Caco-2 (cell line): ENCODE measurements at regions of chr13 and their contacts with region 1.

Region 1: GRCh38 chr13:67224148-67224846 is 5.8 kb downstream of the PCDH9 start:
- DNase-seq: peak; percentile 60 to 63
- H3K4me3 ChIP-seq: no peak overlapping the region
- H3K4me3 Mint-ChIP-seq: no peak overlapping the region
- H3K27ac Mint-ChIP-seq: no peak overlapping the region
- H3K4me1 ChIP-seq: no peaks in the 10 kb centered on the region
- H3K4me1 Mint-ChIP-seq: peaks cover 9% of the 10 kb centered on the region
- H3K27me3 ChIP-seq: no peaks in the 10 kb centered on the region
- H3K27me3 Mint-ChIP-seq: peaks cover 11% of the 10 kb centered on the region
- CTCF ChIP-seq: peak; percentile 69 to 81

Region 2: DNA sequence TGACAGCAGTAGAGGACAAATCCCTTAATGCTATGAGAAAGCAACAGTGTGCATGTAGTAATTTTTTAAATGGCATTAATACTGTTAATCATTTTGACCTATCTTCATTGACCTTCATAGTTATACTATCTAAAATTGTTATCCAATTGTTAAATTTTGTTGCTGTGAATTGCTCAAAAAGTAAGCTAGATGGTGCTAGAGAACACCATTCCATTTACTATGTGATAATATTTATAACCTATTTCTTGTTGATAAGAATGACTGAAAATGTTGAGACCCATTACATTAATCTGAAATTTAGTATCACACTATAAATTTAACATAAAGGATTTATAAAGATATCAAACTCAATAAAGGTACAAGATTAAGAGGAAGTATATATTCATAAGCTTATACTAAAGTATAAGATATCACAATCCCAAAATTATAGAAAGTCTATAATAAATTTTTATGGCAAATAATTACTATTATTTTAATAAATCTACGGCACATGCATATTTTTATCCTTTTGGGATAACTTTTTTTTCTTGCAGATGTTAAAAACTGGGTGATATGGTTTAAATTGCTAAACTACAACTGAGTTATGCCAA is 1567.5 kb before region 1 on chr13:
- CTCF ChIA-PET with region 1: no interaction called
- POLR2A ChIA-PET with region 1: no interaction called
- intact Hi-C with region 1: loop called (anchors 5 kb)
- DNase-seq: no peak
- H3K4me3 ChIP-seq: no peak overlapping the region
- H3K4me3 Mint-ChIP-seq: no peak overlapping the region
- H3K27ac Mint-ChIP-seq: no peak overlapping the region
- H3K4me1 ChIP-seq: no peaks in the 10 kb centered on the region
- H3K4me1 Mint-ChIP-seq: no peaks in the 10 kb centered on the region
- H3K27me3 ChIP-seq: no peaks in the 10 kb centered on the region
- H3K27me3 Mint-ChIP-seq: peaks cover under 1% of the 10 kb centered on the region
- CTCF ChIP-seq: peak; percentile 23 to 41

Region 3: DNA sequence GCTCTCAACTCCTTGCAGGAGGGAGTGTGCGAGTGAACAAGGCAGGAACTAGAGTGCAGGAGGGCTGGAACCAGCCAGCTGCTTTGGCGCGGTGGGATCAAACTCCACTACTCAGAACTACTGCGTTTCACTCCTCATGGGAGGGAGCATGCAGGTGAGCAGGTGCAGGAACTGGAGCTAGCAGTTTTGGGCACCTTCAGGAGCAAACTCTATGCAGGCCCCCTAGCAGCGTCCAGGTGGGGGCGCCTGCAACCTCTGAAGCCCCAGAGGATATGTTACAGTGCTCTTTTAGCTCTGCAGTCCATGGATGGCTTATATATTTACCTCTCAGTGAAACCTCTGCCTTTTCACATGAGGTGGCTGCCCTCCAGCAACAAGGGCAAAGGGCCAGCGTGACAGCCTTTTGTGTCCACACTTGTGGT is 1297.5 kb before region 1 on chr13:
- CTCF ChIA-PET with region 1: no interaction called
- POLR2A ChIA-PET with region 1: no interaction called
- intact Hi-C with region 1: loop called (anchors 5 kb)
- DNase-seq: peak; percentile 38 to 41
- H3K4me3 ChIP-seq: no peak overlapping the region
- H3K4me3 Mint-ChIP-seq: no peak overlapping the region
- H3K27ac Mint-ChIP-seq: no peak overlapping the region
- H3K4me1 ChIP-seq: no peaks in the 10 kb centered on the region
- H3K4me1 Mint-ChIP-seq: no peaks in the 10 kb centered on the region
- H3K27me3 ChIP-seq: no peaks in the 10 kb centered on the region
- H3K27me3 Mint-ChIP-seq: peaks cover 7% of the 10 kb centered on the region
- CTCF ChIP-seq: peak in 1 of 2 experiments; percentile 54

Region 4: DNA sequence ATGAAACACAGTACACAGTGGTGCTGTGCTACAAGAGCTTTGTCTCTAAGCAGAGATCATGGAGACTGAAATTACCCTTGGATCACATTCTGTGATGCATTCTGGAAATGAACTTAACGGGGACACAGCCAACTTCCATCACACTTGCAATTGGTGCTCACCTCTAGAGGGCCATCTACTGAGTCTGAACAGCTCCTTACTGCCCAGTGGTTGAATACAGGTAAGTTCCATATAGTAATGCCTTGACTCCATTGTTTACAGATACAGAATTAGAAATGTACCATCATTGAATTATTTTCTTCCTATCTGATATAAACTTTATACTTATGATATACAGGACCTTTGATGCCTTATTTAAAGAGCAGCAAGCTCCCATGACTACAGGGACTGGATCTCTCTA is 680.5 kb before region 1 on chr13:
- CTCF ChIA-PET with region 1: no interaction called
- POLR2A ChIA-PET with region 1: no interaction called
- intact Hi-C with region 1: loop called (anchors 5 kb)
- DNase-seq: peak in 1 of 2 experiments; percentile 14
- H3K4me3 ChIP-seq: no peak overlapping the region
- H3K4me3 Mint-ChIP-seq: no peak overlapping the region
- H3K27ac Mint-ChIP-seq: no peak overlapping the region
- H3K4me1 ChIP-seq: no peaks in the 10 kb centered on the region
- H3K4me1 Mint-ChIP-seq: no peaks in the 10 kb centered on the region
- H3K27me3 ChIP-seq: no peaks in the 10 kb centered on the region
- H3K27me3 Mint-ChIP-seq: no peaks in the 10 kb centered on the region
- CTCF ChIP-seq: peak; percentile 30 to 50

Region 5: GRCh38 chr13:66689628-66690027 is 534.7 kb before region 1 on chr13:
- CTCF ChIA-PET with region 1: no interaction called
- POLR2A ChIA-PET with region 1: no interaction called
- intact Hi-C with region 1: loop called (anchors 10 kb)
- DNase-seq: no peak
- H3K4me3 ChIP-seq: no peak overlapping the region
- H3K4me3 Mint-ChIP-seq: no peak overlapping the region
- H3K27ac Mint-ChIP-seq: no peak overlapping the region
- H3K4me1 ChIP-seq: no peaks in the 10 kb centered on the region
- H3K4me1 Mint-ChIP-seq: no peaks in the 10 kb centered on the region
- H3K27me3 ChIP-seq: no peaks in the 10 kb centered on the region
- H3K27me3 Mint-ChIP-seq: no peaks in the 10 kb centered on the region
- CTCF ChIP-seq: peak in 1 of 2 experiments; percentile 1

Region 6: DNA sequence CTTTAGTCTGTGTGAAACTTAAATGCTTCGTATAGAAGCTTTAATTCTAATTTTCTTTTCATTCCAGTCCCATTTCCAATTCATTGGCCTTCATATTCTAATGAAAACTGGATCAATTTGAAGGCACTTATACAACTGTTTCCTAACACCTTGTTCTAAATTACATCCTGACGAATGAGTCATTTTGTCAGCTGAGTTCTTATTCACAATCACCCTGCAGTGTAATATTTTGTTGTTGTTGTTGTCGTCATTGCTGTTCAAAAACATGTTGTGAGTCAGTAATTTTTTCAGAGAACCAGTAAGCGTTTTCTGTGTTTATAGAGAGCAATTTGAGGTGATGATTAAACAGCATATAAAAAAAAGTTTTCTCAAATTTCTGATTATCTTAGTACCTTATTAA is 284.2 kb before region 1 on chr13:
- CTCF ChIA-PET with region 1: no interaction called
- POLR2A ChIA-PET with region 1: no interaction called
- intact Hi-C with region 1: loop called (anchors 10 kb)
- DNase-seq: no peak
- H3K4me3 ChIP-seq: no peak overlapping the region
- H3K4me3 Mint-ChIP-seq: no peak overlapping the region
- H3K27ac Mint-ChIP-seq: no peak overlapping the region
- H3K4me1 ChIP-seq: no peaks in the 10 kb centered on the region
- H3K4me1 Mint-ChIP-seq: no peaks in the 10 kb centered on the region
- H3K27me3 ChIP-seq: no peaks in the 10 kb centered on the region
- H3K27me3 Mint-ChIP-seq: no peaks in the 10 kb centered on the region
- CTCF ChIP-seq: no peak

Region 7: DNA sequence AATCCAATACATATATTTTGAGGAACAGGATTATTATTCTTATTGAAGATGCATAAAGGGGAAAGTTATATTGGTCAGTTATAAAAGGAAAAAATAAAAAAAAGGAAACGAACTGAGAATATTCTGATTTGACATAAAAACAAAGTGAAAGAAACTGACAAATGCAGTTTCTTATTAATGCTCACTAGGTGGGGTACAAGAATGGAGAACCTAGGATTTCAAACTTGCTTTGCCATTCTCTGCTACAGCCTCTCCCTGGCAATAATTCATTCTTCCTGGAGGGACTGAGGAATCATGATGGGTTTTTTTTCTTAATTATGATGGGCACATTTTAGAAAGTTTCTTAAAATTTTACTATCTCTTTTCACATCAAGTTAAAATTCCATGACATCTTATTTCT is 149.1 kb before region 1 on chr13:
- CTCF ChIA-PET with region 1: interaction called, 5 read pairs
- POLR2A ChIA-PET with region 1: no interaction called
- intact Hi-C with region 1: loop called (anchors 1 kb)
- DNase-seq: no peak
- H3K4me3 ChIP-seq: no peak overlapping the region
- H3K4me3 Mint-ChIP-seq: no peak overlapping the region
- H3K27ac Mint-ChIP-seq: no peak overlapping the region
- H3K4me1 ChIP-seq: peaks cover 28% of the 10 kb centered on the region
- H3K4me1 Mint-ChIP-seq: peaks cover 23% of the 10 kb centered on the region
- H3K27me3 ChIP-seq: no peaks in the 10 kb centered on the region
- H3K27me3 Mint-ChIP-seq: no peaks in the 10 kb centered on the region
- CTCF ChIP-seq: peak in 1 of 2 experiments; percentile 26

Region 8: GRCh38 chr13:67258482-67258881 is 34.2 kb after region 1 on chr13:
- CTCF ChIA-PET with region 1: no interaction called
- POLR2A ChIA-PET with region 1: no interaction called
- intact Hi-C with region 1: no loop called
- DNase-seq: peak; percentile 25 to 35
- H3K4me3 ChIP-seq: no peak overlapping the region
- H3K4me3 Mint-ChIP-seq: no peak overlapping the region
- H3K27ac Mint-ChIP-seq: no peak overlapping the region
- H3K4me1 ChIP-seq: no peaks in the 10 kb centered on the region
- H3K4me1 Mint-ChIP-seq: no peaks in the 10 kb centered on the region
- H3K27me3 ChIP-seq: no peaks in the 10 kb centered on the region
- H3K27me3 Mint-ChIP-seq: no peaks in the 10 kb centered on the region
- CTCF ChIP-seq: no peak

Region 9: DNA sequence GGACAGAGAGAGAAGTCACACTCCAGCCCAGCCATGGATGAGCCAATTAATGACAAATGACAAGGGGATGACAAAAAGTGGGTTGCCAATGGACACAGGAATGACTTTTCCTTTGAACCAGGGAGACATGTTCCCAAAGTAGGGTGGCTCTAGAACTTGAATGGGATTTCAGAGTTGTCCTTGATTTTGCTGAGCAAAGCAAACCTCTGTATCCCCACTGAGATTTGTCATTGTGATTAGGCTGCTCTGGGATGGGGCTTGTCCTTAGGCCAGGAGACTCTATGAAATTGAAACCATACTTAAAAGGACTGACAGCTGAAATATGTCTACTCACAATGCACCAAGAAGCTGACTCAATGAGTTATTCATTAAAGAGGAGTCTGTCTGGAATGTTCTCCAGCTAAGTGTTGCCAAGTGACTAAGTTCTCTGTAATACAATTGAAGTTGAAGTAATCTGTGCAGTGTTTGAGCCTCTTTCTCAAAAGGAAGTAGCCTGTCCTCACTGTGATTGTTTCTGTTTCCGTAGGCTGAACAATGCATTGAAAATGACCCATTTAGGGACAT is 74.9 kb after region 1 on chr13:
- CTCF ChIA-PET with region 1: no interaction called
- POLR2A ChIA-PET with region 1: no interaction called
- intact Hi-C with region 1: no loop called
- DNase-seq: no peak
- H3K4me3 ChIP-seq: no peak overlapping the region
- H3K4me3 Mint-ChIP-seq: no peak overlapping the region
- H3K27ac Mint-ChIP-seq: no peak overlapping the region
- H3K4me1 ChIP-seq: no peaks in the 10 kb centered on the region
- H3K4me1 Mint-ChIP-seq: no peaks in the 10 kb centered on the region
- H3K27me3 ChIP-seq: no peaks in the 10 kb centered on the region
- H3K27me3 Mint-ChIP-seq: no peaks in the 10 kb centered on the region
- CTCF ChIP-seq: no peak

Region 10: GRCh38 chr13:67549331-67549730 is 325.0 kb after region 1 on chr13:
- CTCF ChIA-PET with region 1: no interaction called
- POLR2A ChIA-PET with region 1: no interaction called
- intact Hi-C with region 1: no loop called
- DNase-seq: no peak
- H3K4me3 ChIP-seq: no peak overlapping the region
- H3K4me3 Mint-ChIP-seq: no peak overlapping the region
- H3K27ac Mint-ChIP-seq: no peak overlapping the region
- H3K4me1 ChIP-seq: no peaks in the 10 kb centered on the region; the same call in 1 of the 2 replicates
- H3K4me1 Mint-ChIP-seq: no peaks in the 10 kb centered on the region
- H3K27me3 ChIP-seq: no peaks in the 10 kb centered on the region
- H3K27me3 Mint-ChIP-seq: no peaks in the 10 kb centered on the region
- CTCF ChIP-seq: no peak